Adrenal gland (tissue), 19 donors: ENCODE measurements at regions of chr17 and their contacts with region 1.

Region 1: DNA sequence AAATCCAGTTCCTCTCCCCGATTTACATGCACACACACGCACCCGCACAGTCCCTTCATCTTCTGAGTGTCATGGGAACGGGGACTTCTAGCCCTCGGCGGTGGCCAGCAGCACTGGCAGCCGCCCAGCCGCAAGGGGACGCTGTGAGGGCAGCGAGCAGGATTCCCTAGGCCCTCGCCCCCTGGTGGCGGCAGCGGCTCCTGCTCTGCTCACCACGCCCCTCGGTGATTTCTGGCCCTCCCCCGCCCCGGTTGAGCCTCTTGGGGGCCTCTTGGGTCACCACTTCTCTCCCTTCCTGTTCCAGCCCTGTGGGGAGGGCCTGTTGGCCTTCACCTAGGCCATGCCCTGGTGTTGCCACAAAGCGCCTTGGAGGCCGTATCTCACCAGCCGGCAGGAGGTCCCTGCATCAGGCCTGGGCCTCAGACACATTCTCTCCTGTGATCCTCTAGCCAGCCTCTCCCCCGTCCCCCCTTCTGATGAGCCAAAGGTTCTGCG is 75.2 kb upstream of the KSR1 start:
- DNase-seq: peak; percentile 61 to 89 (median 79)
- H3K4me3 ChIP-seq: no peak overlapping the region
- H3K27ac ChIP-seq: no peak overlapping the region
- H3K4me1 ChIP-seq: peaks cover 8 to 13% of the 10 kb centered on the region in 2 donors
- H3K27me3 ChIP-seq: no peaks in the 10 kb centered on the region
- CTCF ChIP-seq: peak; percentile 83 to 98 (median 92)
- POLR2A ChIP-seq: no peak

Region 2: GRCh38 chr17:27345141-27345904 is 35.7 kb before region 1 on chr17:
- intact Hi-C with region 1: no loop called
- DNase-seq: peak; percentile 41 to 91 (median 58)
- H3K4me3 ChIP-seq: no peak overlapping the region
- H3K27ac ChIP-seq: peak overlapping the region in 3 of 5 donors; percentile 26 to 62 (median 37)
- H3K4me1 ChIP-seq: peaks cover 7 to 18% of the 10 kb centered on the region in 2 donors
- H3K27me3 ChIP-seq: no peaks in the 10 kb centered on the region
- CTCF ChIP-seq: no peak
- POLR2A ChIP-seq: peak; percentile 17 to 61

Region 3: DNA sequence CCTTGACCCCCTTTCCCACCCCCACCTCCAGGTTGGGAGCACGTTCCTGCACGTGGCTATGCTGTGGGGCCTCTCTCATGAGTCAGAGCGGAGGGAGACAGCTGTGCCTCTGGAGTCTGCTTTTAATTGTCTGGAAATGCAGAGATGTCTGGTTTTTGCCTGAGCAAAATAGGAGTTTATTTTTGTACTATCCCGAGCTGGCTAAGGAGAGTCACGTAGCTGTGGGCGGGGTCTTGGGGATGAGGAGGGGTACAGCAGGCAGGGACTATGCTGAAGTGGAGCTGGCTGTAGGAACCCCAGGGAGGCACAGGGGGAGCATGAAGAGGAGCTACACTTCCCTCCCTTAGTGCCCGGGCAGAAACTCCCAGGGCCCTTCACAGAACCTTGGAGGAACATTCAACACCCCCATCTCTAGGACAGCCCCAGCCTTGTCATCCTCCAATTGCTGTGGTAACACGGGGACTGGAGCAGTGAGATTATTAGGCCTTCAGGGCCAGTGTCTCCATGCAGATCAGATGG is 205.2 kb after region 1 on chr17:
- intact Hi-C with region 1: loop called (anchors 10 kb)
- DNase-seq: no peak
- H3K4me3 ChIP-seq: no peak overlapping the region
- H3K27ac ChIP-seq: peak overlapping the region in 1 of 5 donors; percentile 54
- H3K4me1 ChIP-seq: peaks cover 0 to 15% of the 10 kb centered on the region in 2 donors
- H3K27me3 ChIP-seq: no peaks in the 10 kb centered on the region
- CTCF ChIP-seq: no peak
- POLR2A ChIP-seq: no peak